ENCODE measurements at regions of chr4 and their contacts with region 1.

Region 1: DNA sequence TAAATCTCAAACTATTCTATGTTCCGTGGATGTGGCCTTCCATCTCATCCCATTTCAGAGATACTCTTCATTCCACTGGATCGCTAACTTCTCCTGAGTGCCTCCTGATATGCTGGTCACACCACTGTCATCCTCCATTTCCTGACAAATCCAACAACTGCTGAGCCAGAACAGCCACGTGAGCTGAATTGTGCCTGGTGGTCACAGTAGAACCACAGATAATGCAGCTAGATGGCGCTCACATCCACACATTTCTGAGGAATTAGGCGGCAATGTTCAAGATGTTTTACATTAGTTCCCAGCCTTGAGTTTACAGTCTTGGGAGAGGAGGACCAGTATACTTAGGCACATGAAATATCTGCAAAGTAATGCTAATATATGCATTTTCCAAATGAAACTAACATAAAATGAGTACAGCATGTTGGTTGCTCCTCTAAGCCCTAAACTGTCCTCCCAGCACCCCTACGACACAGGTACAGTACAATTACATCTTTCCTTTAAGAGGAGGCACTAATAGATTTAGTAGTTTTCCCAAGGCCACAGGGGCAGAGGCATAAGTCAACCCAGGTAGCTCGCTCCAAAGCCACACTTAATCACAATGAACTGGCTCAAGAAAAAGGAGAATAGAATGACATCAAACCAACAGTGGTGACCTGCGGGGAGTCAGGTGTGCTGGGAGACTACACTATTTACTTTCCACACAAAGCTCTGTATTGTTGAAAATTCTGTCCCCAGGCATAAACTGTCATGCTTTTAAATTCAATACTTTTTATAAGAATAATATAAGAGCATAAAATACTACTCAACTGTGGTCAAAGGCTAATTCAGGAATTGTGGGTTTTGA is 134.2 kb downstream of the CHIC2 start:
- DNase-seq: peak; percentile 93
- ATAC-seq: peak; percentile 75
- H3K4me3 ChIP-seq: no peak overlapping the region
- H3K27ac ChIP-seq: peak overlapping the region; percentile 20; the same call in 1 of the 2 replicates
- H3K4me1 ChIP-seq: peaks cover 14% of the 10 kb centered on the region
- H3K27me3 ChIP-seq: no peaks in the 10 kb centered on the region
- CTCF ChIP-seq: peak; percentile 85
- POLR2A ChIP-seq: no peak
- RAD21 ChIP-seq: peak; percentile 84

Region 2: GRCh38 chr4:54064295-54065111 is 134.3 kb after region 1 on chr4 and contains the start of gene CHIC2:
- CTCF ChIA-PET with region 1: interaction called, 3 read pairs
- POLR2A ChIA-PET with region 1: interaction called, 6 read pairs
- dilution Hi-C with region 1: no loop called
- in situ Hi-C with region 1: no loop called
- intact Hi-C with region 1: loop called (anchors 5 kb)
- DNase-seq: peak; percentile 92
- ATAC-seq: peak; percentile 88
- H3K4me3 ChIP-seq: peak within 1 kb of the TSS; percentile 81
- H3K27ac ChIP-seq: peak within 1 kb of the TSS; percentile 97
- H3K4me1 ChIP-seq: peaks cover 13% of the 10 kb centered on the region; the same call in 1 of the 2 replicates
- H3K27me3 ChIP-seq: no peaks in the 10 kb centered on the region
- CTCF ChIP-seq: no peak
- POLR2A ChIP-seq: peak; percentile 96
- RAD21 ChIP-seq: no peak
- total RNA-seq, gene CHIC2: 26.3 and 65.0 TPM in 2 replicates